CD8-positive, alpha-beta T cell (primary cell): ENCODE measurements at regions of chr5 and their contacts with region 1.

Region 1: GRCh38 chr5:138065102-138065501 is 18.7 kb upstream of the WNT8A start:
- DNase-seq: peak in 3 of 9 experiments; percentile 9 to 14 (median 9)
- ATAC-seq: no peak
- H3K4me3 ChIP-seq: no peak overlapping the region
- H3K4me3 Mint-ChIP-seq: no peak overlapping the region
- H3K27ac ChIP-seq: no peak overlapping the region
- H3K27ac Mint-ChIP-seq: no peak overlapping the region
- H3K4me1 ChIP-seq: no peaks in the 10 kb centered on the region
- H3K4me1 Mint-ChIP-seq: peaks cover 4% of the 10 kb centered on the region
- H3K27me3 ChIP-seq: no peaks in the 10 kb centered on the region
- H3K27me3 Mint-ChIP-seq: no peaks in the 10 kb centered on the region
- CTCF ChIP-seq: no peak

Region 2: GRCh38 chr5:138054847-138055558 is 10.1 kb before region 1 on chr5:
- CTCF ChIA-PET with region 1: interaction called, 15 read pairs
- POLR2A ChIA-PET with region 1: no interaction called
- intact Hi-C with region 1: no loop called
- DNase-seq: no peak
- ATAC-seq: no peak
- H3K4me3 ChIP-seq: no peak overlapping the region
- H3K4me3 Mint-ChIP-seq: no peak overlapping the region
- H3K27ac ChIP-seq: no peak overlapping the region
- H3K27ac Mint-ChIP-seq: no peak overlapping the region
- H3K4me1 ChIP-seq: no peaks in the 10 kb centered on the region
- H3K4me1 Mint-ChIP-seq: no peaks in the 10 kb centered on the region
- H3K27me3 ChIP-seq: no peaks in the 10 kb centered on the region
- H3K27me3 Mint-ChIP-seq: peaks cover 5% of the 10 kb centered on the region
- CTCF ChIP-seq: no peak

Region 3: DNA sequence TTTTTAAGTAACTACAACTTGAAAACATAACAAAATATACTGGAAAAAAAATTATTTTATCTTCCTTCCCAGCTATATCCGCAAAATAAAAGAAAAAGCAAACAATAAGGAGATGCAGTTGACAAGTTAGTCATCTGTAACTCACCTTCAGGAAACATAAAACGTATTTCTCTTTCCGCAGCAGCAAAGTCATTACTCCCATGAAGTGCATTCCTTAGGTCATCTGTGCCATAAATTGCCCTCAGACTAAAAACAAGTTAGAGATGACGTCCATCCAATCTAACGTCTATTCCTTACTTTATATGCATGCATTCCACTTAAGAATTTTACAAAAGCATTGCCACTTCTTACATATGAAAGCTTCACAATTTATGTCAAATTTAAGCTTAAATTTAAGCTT is 63.2 kb after region 1 on chr5:
- CTCF ChIA-PET with region 1: interaction called, 14 read pairs
- POLR2A ChIA-PET with region 1: no interaction called
- intact Hi-C with region 1: no loop called
- DNase-seq: no peak
- ATAC-seq: no peak
- H3K4me3 ChIP-seq: no peak overlapping the region
- H3K4me3 Mint-ChIP-seq: no peak overlapping the region
- H3K27ac ChIP-seq: no peak overlapping the region
- H3K27ac Mint-ChIP-seq: no peak overlapping the region
- H3K4me1 ChIP-seq: no peaks in the 10 kb centered on the region
- H3K4me1 Mint-ChIP-seq: no peaks in the 10 kb centered on the region
- H3K27me3 ChIP-seq: no peaks in the 10 kb centered on the region
- H3K27me3 Mint-ChIP-seq: peaks cover 2% of the 10 kb centered on the region
- CTCF ChIP-seq: no peak

Region 4: DNA sequence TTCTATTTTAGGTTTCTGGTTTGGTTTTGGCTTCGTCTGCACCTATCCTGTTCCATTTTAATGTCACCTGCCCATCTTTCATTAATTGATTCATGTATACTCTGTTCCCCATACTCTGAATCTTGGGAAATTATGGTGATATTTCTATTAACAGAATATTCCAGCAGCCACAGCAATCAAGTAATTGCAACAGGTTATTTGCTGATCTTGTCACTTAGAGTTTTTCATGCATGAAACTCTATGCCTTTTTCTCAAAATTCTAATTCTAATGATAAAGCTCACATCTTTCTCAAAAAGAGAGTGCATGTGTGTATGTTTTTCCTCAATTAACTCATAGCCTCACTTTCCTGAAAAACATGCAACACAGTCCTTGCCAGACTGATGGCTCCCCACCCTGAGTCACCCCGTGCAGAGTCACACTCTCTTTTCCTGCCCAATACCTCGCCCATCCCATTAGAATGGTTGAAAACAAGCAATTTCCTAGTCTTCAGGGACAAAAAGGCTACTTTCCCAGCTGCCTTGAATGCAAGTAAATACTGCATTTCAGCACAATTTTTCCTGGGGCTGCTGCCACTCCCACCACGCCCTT is 193.7 kb after region 1 on chr5:
- CTCF ChIA-PET with region 1: no interaction called
- POLR2A ChIA-PET with region 1: no interaction called
- intact Hi-C with region 1: no loop called
- DNase-seq: no peak
- ATAC-seq: no peak
- H3K4me3 ChIP-seq: no peak overlapping the region
- H3K4me3 Mint-ChIP-seq: no peak overlapping the region
- H3K27ac ChIP-seq: no peak overlapping the region
- H3K27ac Mint-ChIP-seq: no peak overlapping the region
- H3K4me1 ChIP-seq: no peaks in the 10 kb centered on the region
- H3K4me1 Mint-ChIP-seq: no peaks in the 10 kb centered on the region
- H3K27me3 ChIP-seq: no peaks in the 10 kb centered on the region
- H3K27me3 Mint-ChIP-seq: peaks cover 2% of the 10 kb centered on the region
- CTCF ChIP-seq: no peak